ENCODE measurements at regions of chr20 and their contacts with region 1.

Region 1: DNA sequence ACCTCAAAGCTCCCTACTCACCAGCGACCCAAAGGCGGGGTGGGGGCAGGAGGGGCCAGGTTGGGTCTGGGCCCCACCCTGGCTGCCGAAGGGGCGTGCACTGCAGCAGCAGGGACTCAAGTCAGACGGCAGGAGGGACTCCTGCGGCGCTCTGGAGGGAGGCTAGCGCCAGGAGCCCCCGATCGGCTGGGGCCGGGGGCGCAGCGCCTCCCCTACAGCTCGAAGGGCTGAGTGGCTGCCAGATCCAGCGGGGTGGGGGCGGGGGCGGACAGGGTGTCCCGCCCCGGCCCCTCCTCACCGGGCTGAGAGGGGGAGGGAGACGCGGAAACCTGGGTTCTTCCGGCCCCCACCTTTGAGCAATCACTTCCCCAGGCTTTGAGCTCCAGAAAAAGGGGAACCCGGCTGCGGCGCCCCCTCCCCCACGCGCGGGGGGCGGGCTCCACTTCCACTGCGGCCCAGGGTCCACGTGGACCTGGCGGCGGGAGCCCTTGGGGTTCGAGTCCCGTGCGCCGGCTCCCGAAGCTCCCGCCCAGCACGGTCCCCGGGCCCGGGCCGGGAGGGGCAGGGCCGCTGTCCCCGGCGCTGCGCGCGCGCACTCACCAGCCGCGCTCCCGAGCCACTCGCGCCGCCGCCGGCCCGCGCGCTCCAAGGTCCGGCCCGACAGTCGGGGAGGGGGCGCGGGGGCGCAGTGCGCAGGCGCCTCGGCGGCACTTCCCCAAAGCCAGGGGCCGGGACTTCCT is at the start of gene RGS19:
- DNase-seq: peak; percentile 91 to 98
- H3K4me3 ChIP-seq: peak within 1 kb of the TSS; percentile 96
- H3K4me3 Mint-ChIP-seq: peak within 1 kb of the TSS; percentile 88
- H3K27ac Mint-ChIP-seq: peak within 1 kb of the TSS; percentile 75
- H3K4me1 ChIP-seq: peaks cover 32% of the 10 kb centered on the region
- H3K4me1 Mint-ChIP-seq: peaks cover 22% of the 10 kb centered on the region
- H3K27me3 ChIP-seq: peaks cover 2% of the 10 kb centered on the region
- H3K27me3 Mint-ChIP-seq: peaks cover 4% of the 10 kb centered on the region
- CTCF ChIP-seq: peak in 1 of 2 experiments; percentile 18
- total RNA-seq, gene RGS19: 29.3 and 34.3 TPM in 2 replicates

Region 2: DNA sequence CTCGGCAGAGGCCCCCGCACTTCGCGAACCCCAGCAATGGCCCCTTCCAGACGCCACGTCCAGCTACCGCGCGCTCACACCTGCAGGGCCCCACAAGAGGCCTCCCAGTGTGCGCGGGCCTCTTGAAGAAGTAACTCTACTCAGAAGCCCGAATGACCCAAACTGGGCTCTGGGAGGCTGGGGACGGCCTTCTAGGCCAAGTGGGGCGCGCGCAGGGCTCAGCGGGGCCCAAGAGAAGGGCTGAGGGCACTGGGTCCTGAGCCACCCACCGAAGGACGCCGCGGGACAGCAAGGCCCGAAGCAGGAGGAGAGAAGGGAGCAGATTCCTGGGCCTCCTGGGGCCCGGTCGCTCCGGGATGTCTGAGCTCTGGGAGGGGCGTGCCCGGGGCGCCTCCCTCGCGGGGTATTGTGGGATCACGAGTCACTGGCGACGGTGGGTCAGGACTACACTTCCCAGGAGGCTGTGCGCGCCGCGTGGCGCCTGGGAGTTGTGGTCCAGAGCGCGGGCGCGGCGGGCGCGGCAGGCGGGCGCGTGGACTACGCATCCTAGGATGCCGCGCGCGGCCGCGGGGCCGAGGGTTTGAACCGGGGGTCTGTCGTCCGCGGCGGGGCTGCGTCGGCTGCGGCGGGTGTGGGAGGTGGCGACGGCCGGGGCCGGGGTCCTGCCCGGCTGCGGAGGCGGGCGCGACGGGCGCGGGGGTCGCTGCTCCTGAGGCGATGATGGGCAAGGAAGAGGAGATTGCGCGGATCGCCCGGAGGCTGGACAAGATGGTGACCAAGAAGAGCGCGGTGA is 16.7 kb before region 1 on chr20 and contains the start of gene TCEA2:
- CTCF ChIA-PET with region 1: interaction called, 17 read pairs
- POLR2A ChIA-PET with region 1: interaction called, 10 read pairs
- intact Hi-C with region 1: loop called (anchors 2 kb)
- DNase-seq: peak; percentile 99 to 100
- H3K4me3 ChIP-seq: peak within 1 kb of the TSS; percentile 74
- H3K4me3 Mint-ChIP-seq: peak within 1 kb of the TSS; percentile 81
- H3K27ac Mint-ChIP-seq: peak within 1 kb of the TSS; percentile 16
- H3K4me1 ChIP-seq: peaks cover 23% of the 10 kb centered on the region
- H3K4me1 Mint-ChIP-seq: peaks cover 28% of the 10 kb centered on the region
- H3K27me3 ChIP-seq: no peaks in the 10 kb centered on the region
- H3K27me3 Mint-ChIP-seq: no peaks in the 10 kb centered on the region
- CTCF ChIP-seq: no peak
- total RNA-seq, gene TCEA2: 39.9 and 48.3 TPM in 2 replicates

Region 3: GRCh38 chr20:64101731-64102621 is 22.5 kb after region 1 on chr20:
- CTCF ChIA-PET with region 1: interaction called, 17 read pairs
- POLR2A ChIA-PET with region 1: interaction called, 4 read pairs
- intact Hi-C with region 1: no loop called
- DNase-seq: peak; percentile 69 to 91
- H3K4me3 ChIP-seq: peak overlapping the region; percentile 52
- H3K4me3 Mint-ChIP-seq: peak overlapping the region; percentile 77
- H3K27ac Mint-ChIP-seq: no peak overlapping the region
- H3K4me1 ChIP-seq: peaks cover 3% of the 10 kb centered on the region; the same call in 1 of the 2 replicates
- H3K4me1 Mint-ChIP-seq: no peaks in the 10 kb centered on the region
- H3K27me3 ChIP-seq: peaks cover 4% of the 10 kb centered on the region; the same call in 1 of the 2 replicates
- H3K27me3 Mint-ChIP-seq: peaks cover 23% of the 10 kb centered on the region
- CTCF ChIP-seq: peak; percentile 96 to 99